ENCODE measurements at regions of chr2 and their contacts with region 1.

Region 1: GRCh38 chr2:30231212-30231995 is at the start of gene LBH:
- DNase-seq: peak; percentile 80 to 95 (median 88)
- ATAC-seq: peak; percentile 58 to 69 (median 63)
- H3K4me3 ChIP-seq: peak within 1 kb of the TSS; percentile 89 to 92
- H3K4me3 Mint-ChIP-seq: peak within 1 kb of the TSS; percentile 89 to 98 (median 92)
- H3K27ac ChIP-seq: peak within 1 kb of the TSS; percentile 90
- H3K27ac Mint-ChIP-seq: peak within 1 kb of the TSS; percentile 88 to 96
- H3K4me1 ChIP-seq: peaks cover 23 to 59% of the 10 kb centered on the region in 2 experiments
- H3K4me1 Mint-ChIP-seq: peaks cover 48 to 64% (median 63%) of the 10 kb centered on the region in 3 donors
- H3K27me3 ChIP-seq: no peaks in the 10 kb centered on the region
- H3K27me3 Mint-ChIP-seq: no peaks in the 10 kb centered on the region
- total RNA-seq, gene LBH: 209 to 386 (median 323) TPM

Region 2: GRCh38 chr2:30165050-30165520 is 66.3 kb before region 1 on chr2:
- CTCF ChIA-PET with region 1: interaction called, 9 to 23 read pairs
- POLR2A ChIA-PET with region 1: interaction called, 4 to 13 read pairs
- DNase-seq: peak in 34 of 35 experiments; percentile 6 to 89 (median 66)
- ATAC-seq: peak; percentile 43 to 96 (median 92)
- H3K4me3 ChIP-seq: no peak overlapping the region
- H3K4me3 Mint-ChIP-seq: peak overlapping the region in 1 of 3 donors; percentile 34
- H3K27ac ChIP-seq: no peak overlapping the region
- H3K27ac Mint-ChIP-seq: no peak overlapping the region
- H3K4me1 ChIP-seq: peaks cover 0 to 3% of the 10 kb centered on the region in 2 experiments
- H3K4me1 Mint-ChIP-seq: peaks cover 8 to 33% (median 11%) of the 10 kb centered on the region in 3 donors
- H3K27me3 ChIP-seq: no peaks in the 10 kb centered on the region
- H3K27me3 Mint-ChIP-seq: no peaks in the 10 kb centered on the region

Region 3: DNA sequence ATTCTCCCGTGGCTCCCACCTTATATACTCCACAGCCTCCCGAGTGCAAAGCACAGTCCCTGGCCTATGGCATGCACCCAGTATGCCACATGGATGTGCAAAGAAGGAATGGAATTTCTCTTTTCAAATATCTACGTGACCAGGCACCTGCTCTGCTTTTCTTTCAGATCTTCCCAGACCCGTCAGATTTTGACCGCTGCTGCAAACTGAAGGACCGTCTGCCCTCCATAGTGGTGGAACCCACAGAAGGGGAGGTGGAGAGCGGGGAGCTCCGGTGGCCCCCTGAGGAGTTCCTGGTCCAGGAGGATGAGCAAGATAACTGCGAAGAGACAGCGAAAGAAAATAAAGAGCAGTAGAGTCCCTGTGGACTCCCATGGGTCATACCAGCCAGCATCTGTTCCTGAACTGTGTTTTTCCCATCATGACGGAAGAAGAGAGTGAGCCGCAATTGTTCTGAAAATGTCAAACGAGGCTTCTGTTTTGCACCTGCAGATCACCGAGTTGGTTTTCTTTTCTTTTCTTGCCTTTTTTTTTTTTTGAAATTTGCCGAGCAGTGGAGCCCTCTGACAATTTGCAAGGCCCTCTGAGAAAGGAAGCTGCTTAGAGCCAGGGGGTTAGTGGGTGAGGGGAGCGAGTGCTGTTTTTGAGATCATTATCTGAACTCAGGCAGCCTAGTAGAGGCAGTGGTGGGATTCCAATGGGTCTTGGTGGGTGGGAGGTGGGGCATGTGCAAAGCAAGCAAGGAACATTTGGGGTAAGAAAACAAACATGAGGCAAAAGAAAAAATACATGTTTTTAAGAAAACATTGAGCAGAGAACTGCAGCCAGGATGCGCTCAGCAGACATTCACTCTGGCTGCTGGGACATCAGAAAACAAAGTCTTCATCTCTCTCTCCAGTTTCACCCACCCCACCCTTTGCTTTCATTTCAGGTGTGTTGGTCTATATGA is 26.1 kb after region 1 on chr2:
- CTCF ChIA-PET with region 1: interaction called in 1 of 2 experiments, 4 read pairs
- POLR2A ChIA-PET with region 1: interaction called, 5 to 13 read pairs
- DNase-seq: peak in 23 of 35 experiments; percentile 12 to 77 (median 38)
- ATAC-seq: peak; percentile 68 to 78 (median 75)
- H3K4me3 ChIP-seq: peak overlapping the region; percentile 6 to 46
- H3K4me3 Mint-ChIP-seq: peak overlapping the region; percentile 60 to 78 (median 66)
- H3K27ac ChIP-seq: peak overlapping the region; percentile 58
- H3K27ac Mint-ChIP-seq: peak overlapping the region; percentile 94 to 99
- H3K4me1 ChIP-seq: peaks cover 80 to 89% of the 10 kb centered on the region in 2 experiments
- H3K4me1 Mint-ChIP-seq: peaks cover 99 to 100% (median 99%) of the 10 kb centered on the region in 3 donors
- H3K27me3 ChIP-seq: no peaks in the 10 kb centered on the region
- H3K27me3 Mint-ChIP-seq: no peaks in the 10 kb centered on the region

Region 4: DNA sequence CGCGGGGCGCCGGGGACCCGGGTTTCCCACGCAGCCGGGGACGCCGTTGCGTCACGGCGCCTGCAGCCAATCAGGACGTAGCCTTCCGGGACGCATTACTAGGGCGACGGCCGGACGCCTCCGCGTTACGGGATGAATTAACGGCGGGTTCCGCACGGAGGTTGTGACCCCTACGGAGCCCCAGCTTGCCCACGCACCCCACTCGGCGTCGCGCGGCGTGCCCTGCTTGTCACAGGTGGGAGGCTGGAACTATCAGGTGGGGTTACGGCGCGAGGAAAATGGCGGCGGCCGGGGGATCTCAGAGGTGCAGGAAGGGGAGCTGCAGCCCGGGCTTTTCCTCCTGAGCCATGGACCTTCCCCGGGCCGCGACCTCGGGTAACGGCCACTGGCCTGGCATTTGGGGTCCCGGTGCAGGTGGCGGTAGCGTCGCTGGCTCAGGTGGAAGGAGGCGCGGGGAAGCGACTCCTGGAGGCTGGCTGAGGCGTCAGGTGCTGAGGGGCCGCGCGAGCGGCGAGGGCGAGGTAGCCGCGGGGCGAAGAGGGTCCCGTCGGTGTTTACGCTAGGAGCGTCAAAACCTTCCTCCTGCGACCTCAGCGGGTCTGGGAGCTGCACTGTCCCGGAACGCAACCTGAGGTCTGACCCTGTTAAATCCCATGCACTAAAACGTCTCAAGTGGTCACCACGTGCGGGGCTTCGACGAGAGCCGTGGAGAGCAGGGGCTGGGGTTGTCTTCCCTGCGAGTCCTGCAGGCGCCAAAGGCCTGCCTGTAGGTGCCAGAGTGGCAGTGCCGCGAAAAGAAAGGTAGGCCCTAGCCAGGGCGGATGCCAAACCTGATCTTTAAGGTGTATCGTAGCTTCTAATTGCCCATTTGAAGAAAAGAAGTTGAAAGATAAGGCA is 216.0 kb after region 1 on chr2 and contains the start of gene LCLAT1:
- CTCF ChIA-PET with region 1: no interaction called
- POLR2A ChIA-PET with region 1: interaction called, 8 to 16 read pairs
- DNase-seq: peak; percentile 71 to 93 (median 82)
- ATAC-seq: peak; percentile 83 to 93 (median 86)
- H3K4me3 ChIP-seq: peak within 1 kb of the TSS; percentile 66 to 93
- H3K4me3 Mint-ChIP-seq: peak within 1 kb of the TSS; percentile 93 to 97 (median 95)
- H3K27ac ChIP-seq: peak within 1 kb of the TSS; percentile 89
- H3K27ac Mint-ChIP-seq: peak within 1 kb of the TSS; percentile 92 to 95
- H3K4me1 ChIP-seq: peaks cover 16 to 17% of the 10 kb centered on the region in 2 experiments
- H3K4me1 Mint-ChIP-seq: peaks cover 39 to 56% (median 40%) of the 10 kb centered on the region in 3 donors
- H3K27me3 ChIP-seq: no peaks in the 10 kb centered on the region
- H3K27me3 Mint-ChIP-seq: no peaks in the 10 kb centered on the region
- total RNA-seq, gene LCLAT1: 13.8 to 33.0 (median 19.6) TPM

Region 5: DNA sequence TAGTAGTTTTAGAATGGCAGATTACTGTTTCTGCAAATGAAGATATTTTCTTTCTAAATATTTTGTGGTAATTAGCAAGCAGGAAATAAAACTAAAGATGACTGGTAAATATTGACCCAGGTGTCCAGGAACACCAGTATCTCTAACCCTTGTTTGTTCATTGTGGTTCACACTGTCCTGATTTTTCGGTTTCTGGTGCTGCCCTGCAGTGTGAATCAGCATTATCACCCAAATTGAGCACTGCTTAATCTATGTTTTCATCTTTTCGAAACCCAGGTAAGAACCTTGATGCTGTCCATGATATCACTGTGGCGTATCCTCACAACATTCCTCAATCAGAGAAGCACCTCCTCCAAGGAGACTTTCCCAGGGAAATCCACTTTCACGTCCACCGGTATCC is 408.4 kb after region 1 on chr2:
- CTCF ChIA-PET with region 1: no interaction called
- POLR2A ChIA-PET with region 1: no interaction called
- DNase-seq: no peak
- ATAC-seq: no peak
- H3K4me3 ChIP-seq: no peak overlapping the region
- H3K4me3 Mint-ChIP-seq: no peak overlapping the region
- H3K27ac ChIP-seq: no peak overlapping the region
- H3K27ac Mint-ChIP-seq: no peak overlapping the region
- H3K4me1 ChIP-seq: no peaks in the 10 kb centered on the region
- H3K4me1 Mint-ChIP-seq: no peaks in the 10 kb centered on the region
- H3K27me3 ChIP-seq: no peaks in the 10 kb centered on the region
- H3K27me3 Mint-ChIP-seq: no peaks in the 10 kb centered on the region